ENCODE measurements at regions of chr2 and their contacts with region 1.

Region 1: GRCh38 chr2:38106405-38107094 is 30.6 kb upstream of the CYP1B1 start:
- DNase-seq: peak; percentile 47
- H3K4me3 ChIP-seq: no peak overlapping the region
- H3K27ac ChIP-seq: no peak overlapping the region
- H3K4me1 ChIP-seq: peaks cover 5% of the 10 kb centered on the region
- H3K27me3 ChIP-seq: no peaks in the 10 kb centered on the region
- CTCF ChIP-seq: no peak
- POLR2A ChIP-seq: no peak

Region 2: DNA sequence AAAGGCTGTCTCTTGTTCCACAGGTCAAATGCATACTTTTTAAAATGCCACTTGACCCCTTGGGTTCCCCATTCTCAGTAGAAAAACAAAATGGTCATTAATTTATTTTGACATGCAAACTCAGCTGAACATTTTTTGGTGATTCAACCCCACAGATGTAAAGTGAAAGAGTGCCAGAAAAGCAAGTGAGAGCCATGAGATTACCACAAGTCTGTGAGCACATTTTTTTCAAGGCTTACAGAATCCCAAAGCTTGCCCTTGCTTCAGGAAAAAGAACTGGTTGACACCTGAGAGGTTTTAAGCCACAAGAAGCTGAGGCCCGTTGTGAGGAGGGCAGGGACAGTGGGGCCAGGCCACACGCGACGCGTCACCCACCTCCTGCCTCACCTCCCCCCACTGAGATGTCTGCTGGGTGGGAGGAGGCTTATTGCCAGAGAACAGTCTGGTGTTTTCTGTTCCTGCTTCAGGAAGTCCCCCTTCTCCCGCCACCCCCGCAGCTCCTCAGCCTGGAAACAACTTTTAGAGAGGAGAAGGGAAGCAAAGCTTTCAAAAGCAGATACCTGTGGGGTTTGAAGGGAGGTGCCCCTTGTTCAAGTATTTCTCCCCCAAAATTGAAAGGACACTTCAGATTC is 39.8 kb after region 1 on chr2:
- CTCF ChIA-PET with region 1: no interaction called
- POLR2A ChIA-PET with region 1: interaction called, 12 read pairs
- dilution Hi-C with region 1: no loop called
- intact Hi-C with region 1: no loop called
- DNase-seq: peak; percentile 65
- H3K4me3 ChIP-seq: peak overlapping the region in 1 of 3 experiments; percentile 5
- H3K27ac ChIP-seq: peak overlapping the region; percentile 93
- H3K4me1 ChIP-seq: peaks cover 15% of the 10 kb centered on the region
- H3K27me3 ChIP-seq: no peaks in the 10 kb centered on the region
- CTCF ChIP-seq: no peak
- POLR2A ChIP-seq: no peak